Naive thymus-derived CD4-positive, alpha-beta T cell (primary cell): ENCODE measurements at regions of chr12 and their contacts with region 1.

Region 1: GRCh38 chr12:89019408-89020120 is 332.7 kb downstream of the DUSP6 start:
- DNase-seq: peak; percentile 27 to 75 (median 60)
- ATAC-seq: peak; percentile 96
- H3K4me3 ChIP-seq: peak overlapping the region; percentile 14
- H3K4me3 Mint-ChIP-seq: no peak overlapping the region
- H3K27ac ChIP-seq: no peak overlapping the region
- H3K27ac Mint-ChIP-seq: no peak overlapping the region
- H3K4me1 ChIP-seq: peaks cover 0 to 8% of the 10 kb centered on the region in 2 donors
- H3K4me1 Mint-ChIP-seq: peaks cover 0 to 29% (median 5%) of the 10 kb centered on the region in 7 donors
- H3K27me3 ChIP-seq: no peaks in the 10 kb centered on the region
- H3K27me3 Mint-ChIP-seq: peaks cover 0 to 13% (median 5%) of the 10 kb centered on the region in 5 donors

Region 2: GRCh38 chr12:89040146-89040964 is 20.8 kb after region 1 on chr12:
- CTCF ChIA-PET with region 1: interaction called, 6 read pairs
- POLR2A ChIA-PET with region 1: no interaction called
- intact Hi-C with region 1: loop called (anchors 1 kb)
- DNase-seq: peak; percentile 13 to 76 (median 43)
- ATAC-seq: peak; percentile 93
- H3K4me3 ChIP-seq: no peak overlapping the region
- H3K4me3 Mint-ChIP-seq: peak overlapping the region; percentile 29 to 77 (median 54)
- H3K27ac ChIP-seq: no peak overlapping the region
- H3K27ac Mint-ChIP-seq: peak overlapping the region; percentile 1 to 88 (median 68)
- H3K4me1 ChIP-seq: peaks cover 7 to 12% of the 10 kb centered on the region in 2 donors
- H3K4me1 Mint-ChIP-seq: peaks cover 21 to 60% (median 31%) of the 10 kb centered on the region in 7 donors
- H3K27me3 ChIP-seq: no peaks in the 10 kb centered on the region
- H3K27me3 Mint-ChIP-seq: no peaks in the 10 kb centered on the region

Region 3: DNA sequence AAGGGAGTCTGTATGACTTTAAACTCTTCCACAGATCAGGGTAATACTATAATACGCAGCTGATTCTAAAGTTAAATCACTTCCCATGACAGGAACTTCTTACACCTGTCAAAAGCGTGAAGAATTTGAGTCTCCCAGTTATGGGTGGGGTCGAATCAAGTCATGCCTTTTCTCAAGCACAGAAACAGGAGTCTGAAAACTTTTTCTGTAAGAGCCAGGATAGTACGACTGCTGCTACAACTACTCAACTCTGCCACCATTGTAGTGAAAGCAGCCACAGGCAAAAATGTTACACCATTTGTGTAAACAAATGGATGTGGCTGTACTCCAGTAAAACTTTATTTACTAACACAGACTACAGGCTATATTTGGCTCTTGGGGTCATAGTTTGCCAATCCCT is 242.4 kb after region 1 on chr12:
- CTCF ChIA-PET with region 1: no interaction called
- POLR2A ChIA-PET with region 1: no interaction called
- intact Hi-C with region 1: no loop called
- DNase-seq: no peak
- ATAC-seq: no peak
- H3K4me3 ChIP-seq: no peak overlapping the region
- H3K4me3 Mint-ChIP-seq: no peak overlapping the region
- H3K27ac ChIP-seq: no peak overlapping the region
- H3K27ac Mint-ChIP-seq: no peak overlapping the region
- H3K4me1 ChIP-seq: no peaks in the 10 kb centered on the region
- H3K4me1 Mint-ChIP-seq: peaks cover 0 to 31% (median 4%) of the 10 kb centered on the region in 7 donors
- H3K27me3 ChIP-seq: no peaks in the 10 kb centered on the region
- H3K27me3 Mint-ChIP-seq: no peaks in the 10 kb centered on the region

Region 4: DNA sequence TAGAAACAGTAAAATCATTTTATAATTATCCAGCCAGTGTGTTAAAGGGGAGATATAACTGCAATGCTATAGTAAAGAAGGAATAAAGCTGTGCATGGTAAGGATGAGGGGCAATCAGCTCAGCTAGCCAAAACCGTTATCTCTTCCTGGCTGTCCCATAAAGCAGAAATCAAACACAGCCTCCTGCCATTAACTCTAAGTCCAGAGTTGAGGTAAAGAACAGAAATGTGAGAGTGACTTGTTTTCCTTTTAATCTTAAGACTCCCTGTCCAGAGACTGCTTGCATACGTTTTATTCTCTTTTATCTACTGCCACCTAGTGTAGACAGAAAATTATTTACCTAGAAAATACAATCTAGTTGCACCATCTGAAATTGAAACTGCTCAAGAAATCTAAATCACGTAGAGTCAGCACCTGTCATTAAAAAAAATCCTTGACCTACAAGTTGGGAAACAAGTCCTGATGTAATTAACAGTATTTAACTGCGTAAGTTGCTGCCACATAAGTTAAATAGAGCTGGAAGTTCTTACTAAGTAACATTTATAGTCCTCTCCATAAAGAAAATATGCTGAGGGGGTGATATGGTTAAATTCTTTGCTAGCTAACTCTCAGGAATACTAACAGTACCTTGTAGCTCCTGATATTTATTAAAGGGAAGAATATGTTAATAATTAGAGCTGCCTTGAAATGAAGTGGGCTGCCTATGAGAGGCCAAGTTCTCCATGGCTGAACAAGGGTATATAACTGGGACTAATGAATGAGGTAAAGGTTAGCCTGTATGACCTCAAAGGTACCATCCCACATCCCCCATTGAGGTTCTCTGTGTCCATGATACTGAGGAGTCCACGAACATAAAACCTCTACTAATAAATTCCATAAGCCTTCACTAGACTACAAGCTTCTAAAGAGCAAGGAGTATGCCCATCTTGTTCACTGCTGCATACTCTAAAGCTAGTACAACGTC is 442.4 kb after region 1 on chr12:
- CTCF ChIA-PET with region 1: interaction called, 50 read pairs
- POLR2A ChIA-PET with region 1: no interaction called
- intact Hi-C with region 1: loop called (anchors 1 kb)
- DNase-seq: peak in 6 of 9 donors; percentile 26 to 68 (median 54)
- ATAC-seq: peak; percentile 95
- H3K4me3 ChIP-seq: no peak overlapping the region
- H3K4me3 Mint-ChIP-seq: peak overlapping the region in 7 of 10 donors; percentile 10 to 81 (median 53)
- H3K27ac ChIP-seq: no peak overlapping the region
- H3K27ac Mint-ChIP-seq: peak overlapping the region in 6 of 9 donors; percentile 5 to 71 (median 41)
- H3K4me1 ChIP-seq: peaks cover 0 to 3% of the 10 kb centered on the region in 2 donors
- H3K4me1 Mint-ChIP-seq: peaks cover 7 to 52% (median 18%) of the 10 kb centered on the region in 7 donors
- H3K27me3 ChIP-seq: no peaks in the 10 kb centered on the region
- H3K27me3 Mint-ChIP-seq: no peaks in the 10 kb centered on the region

Region 5: DNA sequence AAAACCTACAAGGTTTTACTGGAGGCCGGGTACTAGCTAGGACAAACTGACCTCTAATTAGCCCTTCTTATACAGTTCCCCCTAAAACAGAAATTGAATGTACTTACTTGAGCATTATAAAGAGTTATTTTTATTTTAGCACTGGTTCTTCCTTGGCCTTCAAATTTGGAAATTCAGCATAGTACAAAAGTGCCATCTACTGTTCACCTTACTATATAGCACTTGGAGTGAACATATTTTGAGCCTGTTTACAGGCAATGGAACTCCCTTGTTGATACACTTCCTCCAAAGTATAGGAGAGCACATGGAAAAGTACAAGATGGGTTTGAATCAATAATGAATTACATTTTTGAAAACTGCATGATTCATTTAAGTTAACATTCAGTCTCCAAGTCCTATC is 510.2 kb after region 1 on chr12:
- CTCF ChIA-PET with region 1: interaction called, 15 read pairs
- POLR2A ChIA-PET with region 1: interaction called, 3 read pairs
- intact Hi-C with region 1: loop called (anchors 1 kb)
- DNase-seq: peak in 7 of 9 donors; percentile 30 to 62 (median 52)
- ATAC-seq: peak; percentile 58
- H3K4me3 ChIP-seq: no peak overlapping the region
- H3K4me3 Mint-ChIP-seq: no peak overlapping the region
- H3K27ac ChIP-seq: no peak overlapping the region
- H3K27ac Mint-ChIP-seq: peak overlapping the region in 4 of 9 donors; percentile 7 to 71 (median 47)
- H3K4me1 ChIP-seq: peaks cover 5 to 6% of the 10 kb centered on the region in 2 donors
- H3K4me1 Mint-ChIP-seq: peaks cover 4 to 28% (median 16%) of the 10 kb centered on the region in 7 donors
- H3K27me3 ChIP-seq: no peaks in the 10 kb centered on the region
- H3K27me3 Mint-ChIP-seq: no peaks in the 10 kb centered on the region

Region 6: DNA sequence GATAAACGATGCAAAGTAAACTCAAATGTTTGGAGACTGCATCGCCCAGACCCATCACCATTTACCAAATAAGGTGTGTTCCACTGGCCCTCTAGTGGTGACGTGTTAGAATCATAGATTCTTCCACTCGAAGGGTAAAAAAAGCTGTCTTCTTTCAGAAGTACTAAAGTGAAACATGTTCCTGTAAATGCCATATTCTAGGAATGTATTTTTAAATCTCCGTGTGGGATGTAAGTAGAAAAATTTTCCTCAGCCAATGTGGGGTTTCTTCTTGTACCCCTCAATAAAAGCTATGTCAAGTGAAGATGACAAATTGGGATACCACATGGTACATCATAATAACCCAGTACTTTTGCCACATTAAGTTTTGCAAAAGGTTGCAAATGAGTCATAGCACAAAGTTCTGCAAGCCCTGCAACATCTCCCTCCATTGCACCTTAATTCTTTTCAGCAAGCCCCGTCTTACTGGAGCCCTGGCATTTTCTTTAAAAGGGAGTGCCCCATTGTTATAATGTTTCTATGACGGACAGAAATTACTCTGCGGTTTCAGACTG is 1834.6 kb after region 1 on chr12:
- CTCF ChIA-PET with region 1: no interaction called
- POLR2A ChIA-PET with region 1: no interaction called
- intact Hi-C with region 1: loop called in 1 of 2 experiments (anchors 5 kb)
- DNase-seq: peak in 3 of 9 donors; percentile 3 to 19 (median 8)
- ATAC-seq: no peak
- H3K4me3 ChIP-seq: no peak overlapping the region
- H3K4me3 Mint-ChIP-seq: no peak overlapping the region
- H3K27ac ChIP-seq: no peak overlapping the region
- H3K27ac Mint-ChIP-seq: no peak overlapping the region
- H3K4me1 ChIP-seq: no peaks in the 10 kb centered on the region
- H3K4me1 Mint-ChIP-seq: no peaks in the 10 kb centered on the region
- H3K27me3 ChIP-seq: no peaks in the 10 kb centered on the region
- H3K27me3 Mint-ChIP-seq: peaks cover 0 to 5% (median 0%) of the 10 kb centered on the region in 5 donors